HCT116 (cell line): ENCODE measurements at regions of chr5 and their contacts with region 1.

Region 1: GRCh38 chr5:158289967-158290366 is 431.0 kb upstream of the CLINT1 start:
- DNase-seq: no peak
- ATAC-seq: no peak
- H3K4me3 ChIP-seq: no peak overlapping the region
- H3K27ac ChIP-seq: no peak overlapping the region
- H3K4me1 ChIP-seq: no peaks in the 10 kb centered on the region
- H3K27me3 ChIP-seq: no peaks in the 10 kb centered on the region; the same call in 1 of the 2 replicates
- CTCF ChIP-seq: no peak
- POLR2A ChIP-seq: no peak
- RAD21 ChIP-seq: no peak

Region 2: DNA sequence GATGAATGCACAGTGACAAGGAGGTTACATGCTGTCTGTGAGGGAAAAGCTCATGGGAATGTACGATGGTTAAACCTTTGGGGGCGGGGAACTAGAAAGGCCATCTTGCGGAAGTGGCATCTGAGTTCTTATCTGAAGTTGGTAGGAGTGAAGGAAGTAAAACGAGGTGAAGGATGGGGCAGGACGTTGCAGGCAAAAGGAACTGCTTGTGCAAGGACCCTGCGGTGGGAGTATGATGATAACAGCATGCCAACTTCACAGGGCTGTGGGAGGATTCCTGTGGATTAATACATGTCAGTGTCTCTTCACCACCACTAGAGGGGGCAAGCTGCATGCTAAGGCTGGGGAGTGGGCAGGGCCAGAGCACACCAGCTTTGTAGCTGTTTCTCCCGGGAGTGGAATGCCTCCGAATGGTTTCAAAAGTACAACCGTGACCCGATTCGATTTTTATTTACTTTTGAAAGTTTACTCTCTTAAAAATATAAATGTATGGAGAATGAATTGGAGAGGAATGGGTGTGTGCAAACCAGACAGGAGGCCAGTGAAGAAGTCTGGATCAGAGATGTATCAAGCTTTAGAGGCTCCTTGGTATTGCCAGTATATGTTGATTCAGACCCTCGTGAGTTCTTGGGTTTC is 961.6 kb before region 1 on chr5:
- CTCF ChIA-PET with region 1: no interaction called
- POLR2A ChIA-PET with region 1: no interaction called
- RAD21 ChIA-PET with region 1: no interaction called
- intact Hi-C with region 1: no loop called
- DNase-seq: peak; percentile 58
- ATAC-seq: peak; percentile 98
- H3K4me3 ChIP-seq: 0 out of 4 replicates have a peak overlapping the region, but pooled peaks of 1 of the 2 experiments have one; percentile 12
- H3K27ac ChIP-seq: no peak overlapping the region
- H3K4me1 ChIP-seq: peaks cover 0 to 4% of the 10 kb centered on the region in 2 experiments; a peak in 1 of 4 replicates
- H3K27me3 ChIP-seq: no peaks in the 10 kb centered on the region
- CTCF ChIP-seq: peak; percentile 92 to 95 (median 92)
- POLR2A ChIP-seq: no peak
- RAD21 ChIP-seq: peak; percentile 91

Region 3: DNA sequence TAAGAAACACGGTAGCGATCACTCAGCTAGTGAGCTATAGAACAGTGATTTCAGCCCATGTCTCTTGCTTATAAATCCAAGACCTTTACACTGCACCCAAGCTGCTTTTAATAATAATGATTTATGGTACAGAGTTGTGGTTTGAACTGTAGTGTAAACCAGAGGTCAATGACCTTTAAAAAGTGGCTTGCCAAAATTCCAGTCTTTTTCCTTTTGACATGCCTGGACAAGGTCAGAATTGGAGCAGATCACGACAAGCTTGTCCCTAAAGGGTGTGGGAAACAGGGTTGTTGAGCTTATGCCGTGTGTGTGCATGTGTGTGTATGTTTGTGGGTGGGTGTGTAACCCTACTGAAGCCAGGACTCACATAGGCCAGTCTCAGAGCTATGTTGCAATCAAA is 205.7 kb before region 1 on chr5:
- CTCF ChIA-PET with region 1: no interaction called
- POLR2A ChIA-PET with region 1: no interaction called
- RAD21 ChIA-PET with region 1: no interaction called
- intact Hi-C with region 1: no loop called
- DNase-seq: no peak
- ATAC-seq: no peak
- H3K4me3 ChIP-seq: no peak overlapping the region
- H3K27ac ChIP-seq: no peak overlapping the region
- H3K4me1 ChIP-seq: no peaks in the 10 kb centered on the region
- H3K27me3 ChIP-seq: peaks cover 13% of the 10 kb centered on the region; the same call in 1 of the 2 replicates
- CTCF ChIP-seq: no peak
- POLR2A ChIP-seq: no peak
- RAD21 ChIP-seq: no peak

Region 4: DNA sequence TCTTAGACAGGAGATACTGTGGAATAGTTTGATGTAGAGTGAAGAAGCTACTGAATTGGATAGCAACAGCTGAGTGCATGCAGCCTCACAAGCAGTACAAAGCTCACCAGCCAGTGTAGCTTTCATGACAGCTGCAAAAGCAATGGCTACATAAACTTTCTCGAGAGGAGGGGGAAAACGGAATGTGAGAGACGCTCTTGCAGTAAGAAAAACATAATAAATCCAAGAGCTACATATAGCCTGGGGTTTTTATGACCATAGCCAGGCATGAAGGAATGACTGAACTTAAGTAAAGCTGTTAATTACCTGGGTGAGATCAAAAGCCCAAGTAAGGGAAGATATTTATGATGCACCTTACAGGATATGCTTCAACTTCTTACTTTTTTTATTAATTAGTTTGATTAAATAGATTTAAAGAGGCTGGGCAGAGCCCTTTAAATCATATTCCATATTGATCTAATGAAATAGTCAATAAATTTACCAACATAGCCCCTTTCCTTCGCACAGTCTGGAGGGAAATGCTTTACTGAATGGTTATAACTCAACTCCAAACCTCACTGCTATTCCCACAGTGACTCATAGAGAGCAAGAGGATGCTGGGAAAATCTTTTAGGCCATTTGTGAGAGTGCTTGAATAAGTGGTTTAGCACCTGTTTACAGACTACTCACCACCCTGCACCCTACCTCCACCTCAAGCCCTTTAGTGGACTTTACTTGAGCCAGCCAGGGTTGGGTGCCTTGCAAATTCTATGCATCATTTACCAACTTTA is 23.9 kb before region 1 on chr5:
- CTCF ChIA-PET with region 1: no interaction called
- POLR2A ChIA-PET with region 1: no interaction called
- RAD21 ChIA-PET with region 1: no interaction called
- intact Hi-C with region 1: loop called (anchors 1 kb)
- DNase-seq: no peak
- ATAC-seq: no peak
- H3K4me3 ChIP-seq: no peak overlapping the region
- H3K27ac ChIP-seq: no peak overlapping the region
- H3K4me1 ChIP-seq: no peaks in the 10 kb centered on the region
- H3K27me3 ChIP-seq: peaks cover 20% of the 10 kb centered on the region
- CTCF ChIP-seq: no peak
- POLR2A ChIP-seq: no peak
- RAD21 ChIP-seq: no peak